ENCODE measurements at regions of chr14 and their contacts with region 1.

Region 1: DNA sequence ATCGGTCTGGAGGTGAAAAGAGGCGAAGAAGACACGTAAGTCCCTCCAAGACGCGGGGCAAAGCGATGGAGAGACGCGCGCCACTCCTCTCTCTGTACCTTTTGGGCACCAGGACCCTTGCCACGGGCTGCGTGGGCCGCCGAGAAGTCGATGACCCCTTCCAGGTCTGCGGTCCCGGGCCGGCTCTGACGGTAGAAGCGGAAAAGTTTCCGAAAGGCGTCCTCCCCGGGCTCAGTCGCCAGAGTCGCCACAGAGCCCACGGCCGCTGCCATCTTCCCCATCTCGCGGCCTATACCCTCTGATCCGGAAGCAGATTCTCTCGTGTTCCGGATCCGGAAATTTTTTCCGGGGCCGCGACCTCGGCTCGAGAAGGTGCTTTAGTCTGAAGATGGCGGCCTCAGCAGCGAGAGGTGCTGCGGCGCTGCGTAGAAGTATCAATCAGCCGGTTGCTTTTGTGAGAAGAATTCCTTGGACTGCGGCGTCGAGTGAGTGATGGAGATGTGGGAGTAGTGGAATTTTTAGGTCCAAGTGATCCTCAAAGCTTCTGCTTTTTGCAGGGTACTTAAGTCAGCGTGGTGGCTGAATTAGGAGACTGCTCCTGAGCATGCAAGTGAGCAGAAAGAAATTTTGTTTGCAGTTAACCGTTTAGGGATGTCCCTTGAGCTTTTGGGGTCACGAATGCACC is at the starts of genes ALKBH1 and SLIRP:
- DNase-seq: peak; percentile 64 to 88 (median 74)
- ATAC-seq: peak; percentile 97
- H3K4me3 ChIP-seq: peak within 1 kb of the TSS; percentile 82
- H3K27ac ChIP-seq: peak within 1 kb of the TSS; percentile 87
- H3K4me1 ChIP-seq: peaks cover 0 to 6% of the 10 kb centered on the region in 2 experiments; a peak in 2 of 5 replicates
- H3K27me3 ChIP-seq: no peaks in the 10 kb centered on the region
- CTCF ChIP-seq: no peak
- EP300 ChIP-seq: no peak
- POLR2A ChIP-seq: peak; percentile 96
- RAD21 ChIP-seq: no peak
- polyA plus RNA-seq, gene ALKBH1: 5.3 to 9.1 TPM
- polyA plus RNA-seq, gene SLIRP: 1,478 to 1,905 TPM

Region 2: GRCh38 chr14:77616454-77617229 is 91.2 kb before region 1 on chr14 and contains the start of gene SPTLC2:
- CTCF ChIA-PET with region 1: no interaction called
- POLR2A ChIA-PET with region 1: no interaction called
- in situ Hi-C with region 1: no loop called
- intact Hi-C with region 1: loop called (anchors 5 kb)
- DNase-seq: peak; percentile 97 to 98 (median 98)
- ATAC-seq: peak; percentile 98
- H3K4me3 ChIP-seq: peak within 1 kb of the TSS; percentile 96
- H3K27ac ChIP-seq: peak within 1 kb of the TSS; percentile 78
- H3K4me1 ChIP-seq: peaks cover 7 to 9% of the 10 kb centered on the region in 2 experiments; a peak in 3 of 5 replicates
- H3K27me3 ChIP-seq: no peaks in the 10 kb centered on the region
- CTCF ChIP-seq: peak in 1 of 3 experiments; percentile 25; a peak in 2 of 6 replicates
- EP300 ChIP-seq: no peak
- POLR2A ChIP-seq: peak; percentile 70
- RAD21 ChIP-seq: no peak
- polyA plus RNA-seq, gene SPTLC2: 4.5 to 5.4 TPM

Region 3: DNA sequence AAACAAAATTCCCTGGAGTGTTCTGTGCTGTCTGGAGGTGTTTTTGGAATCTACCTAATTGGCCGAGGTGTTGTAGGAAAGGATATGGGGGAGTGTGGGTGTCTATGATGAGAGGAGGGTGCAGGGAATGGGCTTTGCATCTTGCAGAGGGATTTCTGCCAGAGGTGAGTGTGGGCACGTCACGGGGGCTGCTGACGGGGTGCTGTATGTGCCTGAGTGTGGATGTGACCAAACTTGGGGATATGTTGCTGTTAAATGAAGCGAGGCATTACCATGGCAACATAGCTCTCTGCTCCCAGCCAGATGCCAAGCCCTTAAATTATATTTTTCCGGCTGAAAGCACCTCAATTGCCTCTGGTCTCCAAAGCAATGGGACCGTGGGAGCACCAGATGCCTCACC is 47.1 kb before region 1 on chr14:
- CTCF ChIA-PET with region 1: no interaction called
- POLR2A ChIA-PET with region 1: no interaction called
- in situ Hi-C with region 1: no loop called
- intact Hi-C with region 1: loop called (anchors 1 kb)
- DNase-seq: no peak
- ATAC-seq: no peak
- H3K4me3 ChIP-seq: no peak overlapping the region
- H3K27ac ChIP-seq: no peak overlapping the region
- H3K4me1 ChIP-seq: no peaks in the 10 kb centered on the region; a peak in 2 of 5 replicates
- H3K27me3 ChIP-seq: no peaks in the 10 kb centered on the region
- CTCF ChIP-seq: no peak
- EP300 ChIP-seq: no peak
- POLR2A ChIP-seq: no peak
- RAD21 ChIP-seq: no peak

Region 4: DNA sequence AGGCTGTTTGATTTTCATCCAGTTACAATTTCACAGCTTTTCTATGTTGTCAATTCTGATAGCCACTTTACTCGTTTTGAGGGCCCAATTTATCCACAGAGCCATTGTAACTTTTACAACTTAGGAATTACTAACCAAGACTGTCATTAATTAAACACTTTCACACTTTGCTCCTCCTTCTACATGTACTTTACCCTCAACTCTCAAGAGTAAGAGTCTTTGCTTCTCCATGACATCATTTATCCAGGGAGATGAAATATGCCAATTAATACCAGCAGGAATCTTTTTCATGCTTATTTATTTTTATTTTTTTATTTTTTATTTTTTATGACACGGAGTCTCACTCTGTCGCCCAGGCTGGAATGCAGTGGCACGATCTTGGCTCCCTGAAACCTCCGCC is 13.6 kb after region 1 on chr14:
- CTCF ChIA-PET with region 1: no interaction called
- POLR2A ChIA-PET with region 1: interaction called, 11 read pairs
- in situ Hi-C with region 1: no loop called
- intact Hi-C with region 1: no loop called
- DNase-seq: no peak
- ATAC-seq: no peak
- H3K4me3 ChIP-seq: no peak overlapping the region
- H3K27ac ChIP-seq: no peak overlapping the region
- H3K4me1 ChIP-seq: no peaks in the 10 kb centered on the region
- H3K27me3 ChIP-seq: no peaks in the 10 kb centered on the region
- CTCF ChIP-seq: no peak
- EP300 ChIP-seq: no peak
- POLR2A ChIP-seq: no peak
- RAD21 ChIP-seq: no peak

Region 5: GRCh38 chr14:77804614-77805013 is 96.7 kb after region 1 on chr14:
- CTCF ChIA-PET with region 1: no interaction called
- POLR2A ChIA-PET with region 1: no interaction called
- in situ Hi-C with region 1: no loop called
- intact Hi-C with region 1: no loop called
- DNase-seq: peak in 3 of 4 experiments; percentile 20 to 51 (median 27)
- ATAC-seq: no peak
- H3K4me3 ChIP-seq: no peak overlapping the region
- H3K27ac ChIP-seq: no peak overlapping the region
- H3K4me1 ChIP-seq: peaks cover 10% of the 10 kb centered on the region in 2 experiments; a peak in 4 of 5 replicates
- H3K27me3 ChIP-seq: no peaks in the 10 kb centered on the region
- CTCF ChIP-seq: peak; percentile 34 to 51 (median 50); a peak in 5 of 6 replicates
- EP300 ChIP-seq: no peak
- POLR2A ChIP-seq: no peak
- RAD21 ChIP-seq: peak in 1 of 2 experiments; percentile 23; a peak in 2 of 4 replicates

Region 6: DNA sequence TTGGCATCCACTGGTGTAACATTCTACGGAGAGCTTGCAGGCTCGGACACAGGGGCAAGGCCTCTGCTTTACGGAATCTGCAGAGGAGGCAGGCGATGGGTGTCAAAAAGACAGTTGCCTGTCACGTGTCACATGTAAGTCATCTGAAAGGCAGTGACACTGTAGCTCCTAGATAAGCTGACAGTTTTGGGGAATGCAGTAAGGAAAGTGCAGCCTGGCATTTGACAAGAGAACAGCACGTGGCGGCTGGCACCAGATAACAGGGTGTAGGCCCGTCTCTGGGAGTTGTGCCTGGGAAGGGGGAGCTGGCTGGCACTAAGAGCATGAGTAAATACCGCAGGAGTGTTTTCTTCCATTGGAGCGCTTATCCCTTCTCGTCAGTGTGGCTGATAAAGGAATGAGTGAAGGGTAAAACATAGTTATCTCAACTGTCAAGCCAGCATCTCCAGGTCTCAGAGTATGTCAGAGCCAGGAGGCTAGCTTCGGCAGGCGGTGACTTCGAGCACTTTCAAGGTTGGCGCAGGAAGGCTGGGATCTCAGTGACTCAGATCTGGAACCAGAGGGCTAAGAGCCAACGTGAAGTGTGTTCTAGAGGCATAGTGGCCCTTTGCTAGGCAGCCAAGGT is 118.1 kb after region 1 on chr14:
- CTCF ChIA-PET with region 1: no interaction called
- POLR2A ChIA-PET with region 1: no interaction called
- in situ Hi-C with region 1: no loop called
- intact Hi-C with region 1: no loop called
- DNase-seq: peak; percentile 33 to 88 (median 58)
- ATAC-seq: peak; percentile 86
- H3K4me3 ChIP-seq: no peak overlapping the region
- H3K27ac ChIP-seq: peak overlapping the region; percentile 74
- H3K4me1 ChIP-seq: peaks cover 20 to 34% of the 10 kb centered on the region in 2 experiments; a peak in 4 of 5 replicates
- H3K27me3 ChIP-seq: no peaks in the 10 kb centered on the region
- CTCF ChIP-seq: no peak
- EP300 ChIP-seq: peak; percentile 84
- POLR2A ChIP-seq: no peak
- RAD21 ChIP-seq: no peak